Sciatic nerve (tissue), 2 donors: ENCODE measurements at regions of chr2 and their contacts with region 1.

Region 1: GRCh38 chr2:10434886-10435819 is 13.0 kb downstream of the ODC1 start:
- DNase-seq: peak; percentile 85
- ATAC-seq: peak; percentile 87

Region 2: GRCh38 chr2:10072656-10073480 is 362.3 kb before region 1 on chr2:
- intact Hi-C with region 1: loop called (anchors 10 kb)
- DNase-seq: peak; percentile 88
- ATAC-seq: peak; percentile 92

Region 3: GRCh38 chr2:10122386-10123280 is 312.5 kb before region 1 on chr2 and contains the start of gene RRM2:
- intact Hi-C with region 1: loop called (anchors 10 kb)
- DNase-seq: peak; percentile 95
- ATAC-seq: peak; percentile 97
- total RNA-seq, gene RRM2: 1.0 TPM